ENCODE measurements at regions of chr10 and their contacts with region 1.

Region 1: GRCh38 chr10:1968257-1969025 is 231.1 kb upstream of the ADARB2 start:
- DNase-seq: no peak
- ATAC-seq: no peak
- H3K4me3 ChIP-seq: no peak overlapping the region
- H3K4me3 Mint-ChIP-seq: no peak overlapping the region
- H3K27ac ChIP-seq: no peak overlapping the region
- H3K27ac Mint-ChIP-seq: no peak overlapping the region
- H3K4me1 ChIP-seq: no peaks in the 10 kb centered on the region
- H3K4me1 Mint-ChIP-seq: no peaks in the 10 kb centered on the region
- H3K27me3 ChIP-seq: no peaks in the 10 kb centered on the region
- H3K27me3 Mint-ChIP-seq: no peaks in the 10 kb centered on the region
- CTCF ChIP-seq: no peak

Region 2: DNA sequence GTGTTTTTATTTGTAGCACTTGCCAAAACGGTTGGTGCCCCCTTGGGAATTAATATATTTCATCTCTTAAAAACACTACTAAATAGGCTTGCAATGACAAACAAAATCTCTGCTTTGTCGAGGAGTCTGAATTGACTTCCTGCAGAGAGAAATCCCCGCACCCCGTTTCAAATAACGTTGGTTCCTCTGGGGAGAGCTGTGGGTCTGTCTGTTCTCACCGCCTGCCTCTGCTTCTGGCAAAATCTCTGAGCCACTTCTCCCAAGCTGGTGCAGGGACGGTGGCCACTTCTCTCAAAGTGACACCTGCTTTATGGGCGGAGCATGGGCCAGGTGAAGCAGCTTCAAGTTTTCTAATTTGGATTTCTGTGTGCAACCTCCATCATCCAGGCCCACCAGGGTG is 44.9 kb before region 1 on chr10:
- CTCF ChIA-PET with region 1: no interaction called
- POLR2A ChIA-PET with region 1: interaction called, 10 read pairs
- intact Hi-C with region 1: no loop called
- DNase-seq: peak; percentile 31
- ATAC-seq: no peak
- H3K4me3 ChIP-seq: no peak overlapping the region
- H3K4me3 Mint-ChIP-seq: no peak overlapping the region
- H3K27ac ChIP-seq: no peak overlapping the region
- H3K27ac Mint-ChIP-seq: no peak overlapping the region
- H3K4me1 ChIP-seq: peaks cover 0 to 9% of the 10 kb centered on the region in 2 donors
- H3K4me1 Mint-ChIP-seq: no peaks in the 10 kb centered on the region
- H3K27me3 ChIP-seq: no peaks in the 10 kb centered on the region
- H3K27me3 Mint-ChIP-seq: peaks cover 14% of the 10 kb centered on the region
- CTCF ChIP-seq: no peak

Region 3: DNA sequence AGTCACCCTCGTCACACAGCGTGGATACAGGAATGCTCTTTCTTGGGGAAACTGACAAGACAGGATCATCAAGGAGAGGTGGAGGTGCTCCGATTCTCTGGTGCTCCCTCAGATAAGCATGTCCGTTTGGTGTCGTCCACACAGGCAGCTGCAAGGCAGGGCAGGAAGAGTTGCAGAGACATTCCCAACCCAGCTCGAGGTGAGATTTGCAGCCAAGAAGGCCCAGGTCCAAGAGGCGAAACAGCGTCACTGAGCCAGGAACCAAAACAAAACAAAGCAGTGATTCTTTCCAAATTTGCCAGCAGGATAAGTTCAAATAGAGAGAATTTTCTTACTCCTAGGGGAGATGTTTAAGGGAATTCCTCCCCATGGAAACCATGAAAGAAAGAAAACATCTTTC is 712.4 kb after region 1 on chr10:
- CTCF ChIA-PET with region 1: no interaction called
- POLR2A ChIA-PET with region 1: no interaction called
- intact Hi-C with region 1: no loop called
- DNase-seq: no peak
- ATAC-seq: no peak
- H3K4me3 ChIP-seq: no peak overlapping the region
- H3K4me3 Mint-ChIP-seq: no peak overlapping the region
- H3K27ac ChIP-seq: no peak overlapping the region
- H3K27ac Mint-ChIP-seq: no peak overlapping the region
- H3K4me1 ChIP-seq: no peaks in the 10 kb centered on the region
- H3K4me1 Mint-ChIP-seq: no peaks in the 10 kb centered on the region
- H3K27me3 ChIP-seq: no peaks in the 10 kb centered on the region
- H3K27me3 Mint-ChIP-seq: peaks cover 4% of the 10 kb centered on the region
- CTCF ChIP-seq: no peak

Measured in B cell (primary cell).